Pancreas (tissue), 10 donors: ENCODE measurements at regions of chr16 and their contacts with region 1.

Region 1: GRCh38 chr16:67521095-67521804 is 7.4 kb upstream of the RIPOR1 start:
- DNase-seq: peak; percentile 89 to 98 (median 96)
- ATAC-seq: peak; percentile 95 to 98 (median 96)
- H3K4me3 ChIP-seq: peak overlapping the region in 3 of 4 donors; percentile 13 to 38 (median 33)
- H3K27ac ChIP-seq: peak overlapping the region; percentile 63 to 90 (median 72)
- H3K4me1 ChIP-seq: no peaks in the 10 kb centered on the region
- H3K27me3 ChIP-seq: no peaks in the 10 kb centered on the region
- CTCF ChIP-seq: peak; percentile 59 to 74 (median 70)

Region 2: DNA sequence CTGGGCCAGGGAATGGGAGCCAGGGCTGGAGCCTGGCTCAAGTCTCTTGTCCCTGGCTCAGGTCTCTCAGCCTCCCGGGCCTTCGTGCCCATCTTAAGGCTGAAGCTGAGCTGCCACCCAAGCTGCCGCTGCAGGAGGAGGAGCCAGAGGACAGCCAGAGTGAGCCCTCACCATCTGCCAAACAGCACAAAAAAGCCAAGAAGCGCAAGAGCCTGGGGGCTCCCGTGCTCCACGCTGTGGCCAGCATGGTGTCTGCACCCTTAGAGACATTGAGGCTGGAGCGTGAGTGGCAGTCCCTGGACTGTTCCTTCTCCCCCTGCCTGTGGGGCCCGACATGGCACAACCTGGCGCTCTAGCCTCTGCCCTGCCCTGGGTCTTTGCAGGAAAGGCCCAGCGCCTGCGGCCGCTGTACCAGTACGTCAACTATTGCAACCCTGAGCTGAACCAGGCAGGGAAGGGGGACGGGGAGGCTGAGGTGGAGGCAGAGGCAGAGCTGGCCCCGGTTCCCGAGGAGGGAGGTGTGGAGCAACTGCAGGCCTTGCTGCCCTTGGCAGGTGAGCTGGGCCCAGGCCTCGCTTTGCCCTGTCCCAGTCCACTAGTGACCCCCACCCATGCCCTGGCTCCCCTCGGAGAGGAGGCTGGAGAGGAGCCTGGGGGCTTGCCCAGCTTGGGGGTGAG is 146.7 kb after region 1 on chr16:
- intact Hi-C with region 1: loop called in 1 of 3 experiments (anchors 10 kb)
- DNase-seq: peak; percentile 84 to 95 (median 90)
- ATAC-seq: peak; percentile 60 to 81 (median 70)
- H3K4me3 ChIP-seq: peak overlapping the region in 2 of 4 donors; percentile 83 to 86
- H3K27ac ChIP-seq: peak overlapping the region; percentile 71 to 93 (median 83)
- H3K4me1 ChIP-seq: peaks cover 15 to 30% (median 23%) of the 10 kb centered on the region in 3 donors
- H3K27me3 ChIP-seq: no peaks in the 10 kb centered on the region
- CTCF ChIP-seq: peak; percentile 72 to 90 (median 78)